ENCODE measurements at regions of chrX and their contacts with region 1.

Region 1: GRCh38 chrX:19334945-19335626 is 8.6 kb upstream of the PDHA1 start:
- DNase-seq: peak in 1 of 2 experiments; percentile 16
- H3K4me3 ChIP-seq: no peak overlapping the region
- H3K4me3 Mint-ChIP-seq: no peak overlapping the region
- H3K27ac Mint-ChIP-seq: no peak overlapping the region
- H3K4me1 ChIP-seq: no peaks in the 10 kb centered on the region
- H3K4me1 Mint-ChIP-seq: no peaks in the 10 kb centered on the region
- H3K27me3 ChIP-seq: no peaks in the 10 kb centered on the region
- H3K27me3 Mint-ChIP-seq: peaks cover 9% of the 10 kb centered on the region
- CTCF ChIP-seq: peak; percentile 5 to 36

Region 2: DNA sequence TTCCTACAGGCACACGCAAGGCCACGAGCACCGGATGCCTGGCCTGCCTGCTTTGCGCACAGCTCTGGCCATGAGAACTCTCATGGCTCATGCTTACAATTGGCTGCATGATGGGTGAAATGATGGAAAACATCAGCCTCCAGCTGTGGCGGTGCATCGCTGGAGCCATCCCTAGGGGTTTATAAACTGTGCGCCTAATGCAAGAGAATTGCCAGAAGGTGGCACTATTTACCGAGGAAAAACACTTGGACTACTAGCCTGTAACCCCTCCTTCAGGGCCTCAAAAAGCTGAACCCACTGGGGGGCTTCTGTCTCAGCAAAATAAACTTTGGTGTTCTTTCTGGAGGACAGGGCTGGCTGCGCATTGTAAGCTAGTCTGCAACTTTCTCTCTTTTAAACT is 403.1 kb before region 1 on chrX:
- CTCF ChIA-PET with region 1: interaction called, 3 read pairs
- POLR2A ChIA-PET with region 1: no interaction called
- intact Hi-C with region 1: loop called (anchors 5 kb)
- DNase-seq: peak in 1 of 2 experiments; percentile 24
- H3K4me3 ChIP-seq: no peak overlapping the region
- H3K4me3 Mint-ChIP-seq: no peak overlapping the region
- H3K27ac Mint-ChIP-seq: no peak overlapping the region
- H3K4me1 ChIP-seq: no peaks in the 10 kb centered on the region
- H3K4me1 Mint-ChIP-seq: no peaks in the 10 kb centered on the region
- H3K27me3 ChIP-seq: no peaks in the 10 kb centered on the region
- H3K27me3 Mint-ChIP-seq: no peaks in the 10 kb centered on the region
- CTCF ChIP-seq: peak; percentile 17 to 33

Region 3: GRCh38 chrX:19017271-19017670 is 317.8 kb before region 1 on chrX:
- CTCF ChIA-PET with region 1: interaction called, 4 read pairs
- POLR2A ChIA-PET with region 1: no interaction called
- intact Hi-C with region 1: loop called (anchors 2 kb)
- DNase-seq: peak in 1 of 2 experiments; percentile 29
- H3K4me3 ChIP-seq: no peak overlapping the region
- H3K4me3 Mint-ChIP-seq: no peak overlapping the region
- H3K27ac Mint-ChIP-seq: no peak overlapping the region
- H3K4me1 ChIP-seq: no peaks in the 10 kb centered on the region
- H3K4me1 Mint-ChIP-seq: no peaks in the 10 kb centered on the region
- H3K27me3 ChIP-seq: no peaks in the 10 kb centered on the region
- H3K27me3 Mint-ChIP-seq: no peaks in the 10 kb centered on the region
- CTCF ChIP-seq: peak; percentile 56 to 82

Region 4: GRCh38 chrX:19372170-19372546 is 37.1 kb after region 1 on chrX:
- CTCF ChIA-PET with region 1: no interaction called
- POLR2A ChIA-PET with region 1: no interaction called
- intact Hi-C with region 1: no loop called
- DNase-seq: peak; percentile 55 to 72
- H3K4me3 ChIP-seq: peak overlapping the region; percentile 26
- H3K4me3 Mint-ChIP-seq: peak overlapping the region; percentile 63
- H3K27ac Mint-ChIP-seq: peak overlapping the region; percentile 24
- H3K4me1 ChIP-seq: no peaks in the 10 kb centered on the region
- H3K4me1 Mint-ChIP-seq: no peaks in the 10 kb centered on the region
- H3K27me3 ChIP-seq: no peaks in the 10 kb centered on the region
- H3K27me3 Mint-ChIP-seq: no peaks in the 10 kb centered on the region
- CTCF ChIP-seq: peak; percentile 66 to 72

Measured in Caco-2 (cell line).